Activated CD4-positive, alpha-beta memory T cell treated with anti-CD3 and anti-CD28 coated beads for 36 hours (primary cell): ENCODE measurements at regions of chr4 and their contacts with region 1.

Region 1: GRCh38 chr4:99855678-99856077 is 38.5 kb downstream of the LAMTOR3 start:
- DNase-seq: peak; percentile 37
- H3K4me3 Mint-ChIP-seq: no peak overlapping the region
- H3K27ac Mint-ChIP-seq: peak overlapping the region; percentile 7
- H3K4me1 Mint-ChIP-seq: peaks cover 70% of the 10 kb centered on the region
- H3K27me3 Mint-ChIP-seq: no peaks in the 10 kb centered on the region

Region 2: DNA sequence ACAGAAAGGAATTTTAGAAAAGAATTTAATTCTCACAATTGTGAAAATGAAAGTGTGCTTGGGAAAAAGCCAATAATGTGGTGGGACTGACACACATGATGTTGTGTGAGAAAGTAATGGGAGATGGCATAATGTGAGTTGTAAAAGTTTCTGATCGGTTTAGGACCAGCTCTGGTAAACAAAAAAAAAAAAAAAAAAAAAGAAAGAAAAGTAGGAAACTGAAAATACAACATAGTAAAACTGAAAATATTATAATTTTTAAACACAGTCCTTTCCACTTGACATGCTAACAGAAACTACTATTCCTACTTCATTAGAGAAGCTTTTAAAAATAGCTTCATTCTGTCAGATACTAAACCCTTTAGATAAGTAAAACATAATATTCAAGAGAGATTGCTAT is 1566.3 kb before region 1 on chr4:
- CTCF ChIA-PET with region 1: no interaction called
- POLR2A ChIA-PET with region 1: no interaction called
- intact Hi-C with region 1: loop called (anchors 10 kb)
- DNase-seq: no peak
- H3K4me3 Mint-ChIP-seq: peak overlapping the region; percentile 38
- H3K27ac Mint-ChIP-seq: peak overlapping the region; percentile 13
- H3K4me1 Mint-ChIP-seq: peaks cover 51% of the 10 kb centered on the region
- H3K27me3 Mint-ChIP-seq: no peaks in the 10 kb centered on the region

Region 3: GRCh38 chr4:98864560-98864959 is 991.1 kb before region 1 on chr4:
- CTCF ChIA-PET with region 1: no interaction called
- POLR2A ChIA-PET with region 1: no interaction called
- intact Hi-C with region 1: loop called (anchors 10 kb)
- DNase-seq: peak; percentile 79
- H3K4me3 Mint-ChIP-seq: no peak overlapping the region
- H3K27ac Mint-ChIP-seq: peak overlapping the region; percentile 42
- H3K4me1 Mint-ChIP-seq: peaks cover 13% of the 10 kb centered on the region
- H3K27me3 Mint-ChIP-seq: no peaks in the 10 kb centered on the region

Region 4: GRCh38 chr4:99868126-99868596 is 12.5 kb after region 1 on chr4:
- CTCF ChIA-PET with region 1: no interaction called
- POLR2A ChIA-PET with region 1: interaction called, 4 read pairs
- intact Hi-C with region 1: loop called (anchors 1 kb)
- DNase-seq: peak; percentile 60
- H3K4me3 Mint-ChIP-seq: no peak overlapping the region
- H3K27ac Mint-ChIP-seq: peak overlapping the region; percentile 70
- H3K4me1 Mint-ChIP-seq: peaks cover 25% of the 10 kb centered on the region
- H3K27me3 Mint-ChIP-seq: no peaks in the 10 kb centered on the region

Region 5: GRCh38 chr4:100082852-100083251 is 227.2 kb after region 1 on chr4:
- CTCF ChIA-PET with region 1: no interaction called
- POLR2A ChIA-PET with region 1: no interaction called
- intact Hi-C with region 1: loop called (anchors 1 kb)
- DNase-seq: no peak
- H3K4me3 Mint-ChIP-seq: no peak overlapping the region
- H3K27ac Mint-ChIP-seq: peak overlapping the region; percentile 64
- H3K4me1 Mint-ChIP-seq: peaks cover 37% of the 10 kb centered on the region
- H3K27me3 Mint-ChIP-seq: peaks cover 7% of the 10 kb centered on the region